ENCODE measurements at regions of chr17 and their contacts with region 1.

Region 1: DNA sequence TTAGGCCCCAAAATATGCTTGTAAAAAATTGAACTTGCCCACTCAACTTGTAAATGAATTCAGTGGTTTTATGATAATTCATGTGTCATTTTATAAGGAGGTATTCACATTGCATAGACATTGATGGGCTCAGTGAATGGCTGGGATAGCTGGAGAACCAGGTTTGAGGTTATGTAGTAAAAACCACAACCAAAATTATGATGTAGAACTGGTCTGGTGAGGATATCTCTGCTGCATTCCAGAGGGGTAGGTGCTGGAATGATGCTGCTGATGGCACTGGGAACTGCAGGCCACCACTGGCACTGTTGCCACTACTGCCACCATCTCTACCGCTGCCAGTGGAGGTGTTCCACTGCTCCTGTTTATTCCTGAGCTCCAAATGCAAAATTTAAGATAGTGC is 21.5 kb upstream of the RABEP1 start:
- DNase-seq: no peak
- H3K4me3 ChIP-seq: no peak overlapping the region
- H3K27ac ChIP-seq: no peak overlapping the region
- H3K4me1 ChIP-seq: no peaks in the 10 kb centered on the region
- H3K27me3 ChIP-seq: no peaks in the 10 kb centered on the region
- CTCF ChIP-seq: no peak
- EP300 ChIP-seq: no peak
- POLR2A ChIP-seq: no peak

Region 2: GRCh38 chr17:5191541-5192417 is 68.8 kb before region 1 on chr17 and contains the start of gene ZNF594:
- intact Hi-C with region 1: no loop called
- DNase-seq: peak; percentile 98
- H3K4me3 ChIP-seq: peak within 1 kb of the TSS; percentile 76 to 90 (median 80)
- H3K27ac ChIP-seq: peak within 1 kb of the TSS; percentile 80 to 87 (median 82)
- H3K4me1 ChIP-seq: peaks cover 17 to 25% (median 22%) of the 10 kb centered on the region in 4 donors
- H3K27me3 ChIP-seq: no peaks in the 10 kb centered on the region
- CTCF ChIP-seq: peak; percentile 65 to 77 (median 74)
- EP300 ChIP-seq: no peak
- POLR2A ChIP-seq: peak; percentile 42
- total RNA-seq, gene ZNF594: 7.5 to 13.3 (median 9.6) TPM

Region 3: GRCh38 chr17:5329784-5330557 is 69.4 kb after region 1 on chr17:
- intact Hi-C with region 1: loop called (anchors 10 kb)
- DNase-seq: no peak
- H3K4me3 ChIP-seq: no peak overlapping the region
- H3K27ac ChIP-seq: no peak overlapping the region
- H3K4me1 ChIP-seq: peaks cover 0 to 5% (median 0%) of the 10 kb centered on the region in 4 donors
- H3K27me3 ChIP-seq: no peaks in the 10 kb centered on the region
- CTCF ChIP-seq: no peak
- EP300 ChIP-seq: no peak
- POLR2A ChIP-seq: no peak

Measured in esophagus muscularis mucosa (tissue), 4 donors.